ENCODE measurements at regions of chr20 and their contacts with region 1.

Region 1: DNA sequence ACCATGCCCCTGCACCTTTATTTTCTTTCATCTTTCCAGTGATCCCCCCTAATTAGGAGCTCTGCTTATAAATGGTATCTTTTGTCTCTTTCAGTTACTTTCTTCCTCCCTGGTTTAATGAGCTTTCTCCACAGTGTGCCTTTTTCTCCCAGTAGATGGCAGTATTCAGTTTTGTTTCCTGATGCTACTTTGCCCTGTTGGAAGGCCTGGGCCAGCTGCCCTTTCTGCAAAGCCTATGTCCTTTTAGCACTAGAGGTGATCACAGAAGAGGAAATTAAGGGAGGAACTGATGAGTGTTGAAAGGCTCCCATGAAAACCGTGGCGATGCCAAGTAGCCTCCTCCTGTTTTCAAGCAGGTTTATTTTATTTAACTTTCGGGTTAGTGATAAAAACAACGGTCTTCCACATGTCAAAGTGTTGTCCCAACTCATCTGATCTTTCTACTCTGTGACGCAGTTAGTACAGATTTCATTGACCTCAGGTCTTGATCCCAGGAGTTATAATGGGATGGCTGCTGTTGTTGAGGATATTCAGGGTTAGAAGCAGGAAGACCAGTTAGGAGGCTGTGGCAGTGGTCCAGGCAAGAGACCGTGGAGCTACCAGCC is 184.2 kb upstream of the BMP2 start:
- DNase-seq: no peak
- H3K4me3 ChIP-seq: no peak overlapping the region
- CTCF ChIP-seq: peak; percentile 48

Region 2: GRCh38 chr20:6566821-6567220 is 16.4 kb before region 1 on chr20:
- CTCF ChIA-PET with region 1: interaction called, 20 read pairs
- POLR2A ChIA-PET with region 1: no interaction called
- DNase-seq: no peak
- H3K4me3 ChIP-seq: no peak overlapping the region
- CTCF ChIP-seq: no peak

Region 3: GRCh38 chr20:6595704-6596103 is 12.5 kb after region 1 on chr20:
- CTCF ChIA-PET with region 1: interaction called, 11 read pairs
- POLR2A ChIA-PET with region 1: no interaction called
- DNase-seq: no peak
- H3K4me3 ChIP-seq: no peak overlapping the region
- CTCF ChIP-seq: no peak

Region 4: DNA sequence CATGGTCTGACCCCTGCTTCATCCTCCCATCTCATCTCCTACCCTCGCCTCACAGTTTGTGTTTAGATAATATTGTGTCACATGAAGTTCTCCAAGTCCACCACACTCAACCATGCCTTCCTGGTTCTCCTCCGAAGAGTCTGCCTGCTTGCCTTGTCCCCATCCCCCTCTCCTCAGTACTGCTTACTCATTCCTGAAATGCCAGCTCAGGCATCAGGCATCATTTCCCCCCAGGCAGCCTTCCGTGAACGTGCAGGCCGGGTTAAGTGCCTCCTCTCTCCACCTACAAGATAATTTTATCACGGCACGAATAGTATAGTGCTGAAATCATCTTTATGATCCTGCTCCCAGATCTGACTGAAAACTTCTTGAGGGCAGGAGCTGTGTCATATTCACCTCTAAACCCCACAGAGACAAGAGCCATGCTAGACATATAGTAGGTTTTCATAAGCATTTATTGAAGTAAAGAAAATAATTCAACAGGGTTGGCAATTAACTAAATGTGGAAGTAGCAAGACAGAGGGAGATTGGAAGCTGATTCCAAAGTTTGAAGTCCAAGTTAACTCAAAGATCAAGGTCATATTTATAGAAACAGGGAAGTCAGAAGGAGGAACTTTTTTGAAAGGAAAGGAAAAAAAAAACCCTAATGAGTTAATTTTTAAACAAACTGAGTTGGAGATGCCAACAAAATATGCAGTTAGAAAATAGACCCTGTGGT is 135.6 kb after region 1 on chr20:
- CTCF ChIA-PET with region 1: no interaction called
- POLR2A ChIA-PET with region 1: no interaction called
- DNase-seq: no peak
- H3K4me3 ChIP-seq: no peak overlapping the region
- CTCF ChIP-seq: no peak

Region 5: DNA sequence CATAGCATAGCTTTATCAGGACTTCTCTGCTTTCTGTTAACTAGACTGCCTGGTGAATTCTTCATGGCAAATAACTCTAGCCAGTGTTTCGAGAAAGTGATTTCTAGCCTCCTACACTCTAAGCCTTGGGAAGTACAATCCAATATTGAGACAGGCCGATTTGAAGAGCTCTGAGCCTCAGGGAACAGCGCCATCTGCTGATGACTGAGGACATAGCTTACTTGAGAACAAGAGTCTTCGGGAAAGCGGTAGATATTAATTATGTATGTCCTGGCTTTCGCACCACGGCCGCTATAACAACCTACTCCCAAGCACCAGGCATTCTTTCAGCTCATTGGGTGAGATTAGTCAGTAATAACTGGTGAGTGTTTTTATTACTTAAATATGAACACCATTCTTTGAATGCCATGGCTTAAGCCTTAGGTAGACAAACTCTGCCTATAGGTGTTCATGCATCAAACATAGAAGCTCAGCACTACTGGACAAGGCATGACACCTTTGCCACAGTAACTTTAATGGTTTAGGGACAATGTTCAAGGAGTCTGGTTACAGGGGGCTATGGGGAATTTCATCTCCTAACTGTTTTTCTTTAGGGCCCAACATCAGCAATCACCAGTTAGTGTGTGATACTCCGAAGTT is 702.8 kb after region 1 on chr20:
- CTCF ChIA-PET with region 1: interaction called, 10 read pairs
- POLR2A ChIA-PET with region 1: no interaction called
- DNase-seq: peak; percentile 24
- H3K4me3 ChIP-seq: no peak overlapping the region
- CTCF ChIP-seq: peak; percentile 78

Measured in AG04449 (cell line).